ENCODE measurements at regions of chr10 and their contacts with region 1.

Region 1: DNA sequence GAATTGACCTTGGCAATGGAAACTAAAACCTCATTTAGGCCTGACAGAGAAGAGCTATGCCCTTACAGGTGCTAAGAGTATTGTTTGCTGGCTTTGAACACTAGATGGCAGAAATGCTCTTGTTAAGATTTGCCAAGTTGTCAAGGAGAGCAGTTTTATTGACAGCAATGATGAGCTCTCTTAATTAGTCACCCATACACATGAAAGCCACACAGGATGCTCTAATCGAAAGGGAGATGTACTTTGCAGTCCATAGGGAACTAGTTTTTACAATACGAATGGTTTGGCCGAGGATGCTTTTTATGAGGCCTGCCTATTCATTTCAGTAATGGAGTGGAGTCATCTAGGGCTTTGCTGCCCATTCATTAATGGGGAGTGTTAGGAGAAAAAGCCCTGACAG is 45.4 kb upstream of the MBL2 start:
- DNase-seq: peak; percentile 58
- H3K4me3 ChIP-seq: no peak overlapping the region
- H3K27ac ChIP-seq: no peak overlapping the region
- H3K4me1 ChIP-seq: no peaks in the 10 kb centered on the region
- H3K27me3 ChIP-seq: peaks cover 4 to 5% of the 10 kb centered on the region in 2 experiments
- CTCF ChIP-seq: peak; percentile 37 to 60
- POLR2A ChIP-seq: no peak

Region 2: DNA sequence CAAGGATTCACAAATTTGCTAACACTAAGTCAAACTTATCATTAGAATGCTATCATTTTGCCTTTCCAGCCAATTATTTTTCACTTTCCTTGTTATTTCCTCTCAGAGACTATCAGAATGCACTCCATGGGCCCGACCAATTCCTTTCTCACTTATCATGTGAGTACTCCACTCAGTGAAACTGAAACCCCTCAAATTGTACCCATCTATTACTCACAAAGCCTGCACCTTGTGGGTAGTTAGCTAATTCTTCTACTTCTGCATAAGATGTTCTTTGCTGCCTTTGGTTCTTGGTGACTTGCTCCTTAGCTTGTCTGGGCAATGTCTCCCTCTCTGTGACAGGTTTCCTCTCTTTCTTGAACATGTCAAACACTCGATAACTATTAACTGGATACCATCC is 10.2 kb before region 1 on chr10:
- CTCF ChIA-PET with region 1: interaction called, 10 read pairs
- POLR2A ChIA-PET with region 1: no interaction called
- dilution Hi-C with region 1: no loop called
- intact Hi-C with region 1: no loop called
- DNase-seq: no peak
- H3K4me3 ChIP-seq: no peak overlapping the region
- H3K27ac ChIP-seq: no peak overlapping the region
- H3K4me1 ChIP-seq: no peaks in the 10 kb centered on the region
- H3K27me3 ChIP-seq: peaks cover 2 to 6% of the 10 kb centered on the region in 2 experiments
- CTCF ChIP-seq: no peak
- POLR2A ChIP-seq: no peak

Measured in endothelial cell of umbilical vein (primary cell).